HEK293T (cell line): ENCODE measurements at regions of chr22 and their contacts with region 1.

Region 1: GRCh38 chr22:21982338-21982965 is at the start of gene TOP3B:
- DNase-seq: peak; percentile 91

Region 2: DNA sequence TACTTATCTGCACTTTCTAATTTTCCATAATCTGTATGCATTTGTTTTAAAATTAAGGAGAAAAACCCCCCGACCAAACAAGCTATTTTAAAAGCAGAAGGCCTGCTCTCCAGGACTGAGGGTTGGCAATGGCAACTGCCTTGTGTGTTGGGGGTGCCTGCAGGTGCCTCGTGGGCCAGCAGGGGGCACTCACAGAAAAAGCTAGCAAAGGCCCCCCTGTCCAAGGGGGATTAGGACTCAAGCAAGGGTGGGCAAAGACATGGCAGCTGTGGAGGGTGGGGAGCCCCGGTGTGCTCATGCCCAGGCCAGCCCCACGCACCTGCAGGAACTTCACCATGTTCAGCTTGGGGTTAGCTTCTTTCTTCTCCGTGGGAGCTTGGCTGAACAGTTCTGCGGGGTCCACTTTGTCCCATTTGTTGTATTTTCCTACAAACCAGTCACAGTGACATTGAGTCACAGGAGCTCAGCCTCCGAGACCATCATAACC is 10.1 kb before region 1 on chr22:
- CTCF ChIA-PET with region 1: interaction called, 12 read pairs
- POLR2A ChIA-PET with region 1: interaction called, 34 read pairs
- DNase-seq: peak; percentile 85

Region 3: DNA sequence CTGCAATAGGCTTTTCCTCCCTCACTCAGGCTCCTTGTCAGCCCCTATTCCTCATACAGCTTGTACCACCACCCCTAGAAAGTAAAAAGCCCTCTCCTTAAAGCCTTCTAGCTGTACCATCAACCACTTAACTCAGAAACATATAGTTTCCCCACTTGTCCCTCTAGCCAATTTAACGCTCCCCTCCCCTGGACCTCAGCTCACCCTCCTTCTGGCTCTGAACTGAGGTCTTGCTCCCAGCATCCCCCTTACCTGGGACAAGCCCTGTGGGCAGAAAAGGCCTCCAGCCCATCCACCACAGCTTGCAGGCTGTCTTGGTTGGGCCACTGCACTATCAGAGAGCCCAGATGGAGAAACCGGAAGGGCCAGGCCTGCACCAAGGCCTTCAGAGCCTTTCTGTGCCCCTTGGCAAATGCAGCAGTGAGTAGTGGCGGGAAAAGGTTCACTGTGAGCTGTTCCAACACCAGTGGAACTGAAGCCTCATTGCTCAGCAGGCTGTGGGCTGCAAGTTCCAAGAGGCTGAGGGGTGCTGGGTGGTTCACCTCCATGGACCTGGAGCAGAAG is 12.5 kb after region 1 on chr22:
- CTCF ChIA-PET with region 1: interaction called, 10 read pairs
- POLR2A ChIA-PET with region 1: interaction called, 3 read pairs
- DNase-seq: no peak